Esophagus muscularis mucosa (tissue), 4 donors: ENCODE measurements at regions of chr7 and their contacts with region 1.

Region 1: GRCh38 chr7:87152107-87152844 is at the start of gene DMTF1:
- DNase-seq: peak; percentile 99
- H3K4me3 ChIP-seq: peak within 1 kb of the TSS; percentile 69 to 80 (median 74)
- H3K27ac ChIP-seq: peak within 1 kb of the TSS; percentile 86 to 97 (median 96)
- H3K4me1 ChIP-seq: peaks cover 36 to 50% (median 48%) of the 10 kb centered on the region in 4 donors
- H3K27me3 ChIP-seq: no peaks in the 10 kb centered on the region
- CTCF ChIP-seq: no peak
- EP300 ChIP-seq: no peak
- POLR2A ChIP-seq: peak; percentile 66
- total RNA-seq, gene DMTF1: 31.4 to 60.6 (median 40.5) TPM

Region 2: DNA sequence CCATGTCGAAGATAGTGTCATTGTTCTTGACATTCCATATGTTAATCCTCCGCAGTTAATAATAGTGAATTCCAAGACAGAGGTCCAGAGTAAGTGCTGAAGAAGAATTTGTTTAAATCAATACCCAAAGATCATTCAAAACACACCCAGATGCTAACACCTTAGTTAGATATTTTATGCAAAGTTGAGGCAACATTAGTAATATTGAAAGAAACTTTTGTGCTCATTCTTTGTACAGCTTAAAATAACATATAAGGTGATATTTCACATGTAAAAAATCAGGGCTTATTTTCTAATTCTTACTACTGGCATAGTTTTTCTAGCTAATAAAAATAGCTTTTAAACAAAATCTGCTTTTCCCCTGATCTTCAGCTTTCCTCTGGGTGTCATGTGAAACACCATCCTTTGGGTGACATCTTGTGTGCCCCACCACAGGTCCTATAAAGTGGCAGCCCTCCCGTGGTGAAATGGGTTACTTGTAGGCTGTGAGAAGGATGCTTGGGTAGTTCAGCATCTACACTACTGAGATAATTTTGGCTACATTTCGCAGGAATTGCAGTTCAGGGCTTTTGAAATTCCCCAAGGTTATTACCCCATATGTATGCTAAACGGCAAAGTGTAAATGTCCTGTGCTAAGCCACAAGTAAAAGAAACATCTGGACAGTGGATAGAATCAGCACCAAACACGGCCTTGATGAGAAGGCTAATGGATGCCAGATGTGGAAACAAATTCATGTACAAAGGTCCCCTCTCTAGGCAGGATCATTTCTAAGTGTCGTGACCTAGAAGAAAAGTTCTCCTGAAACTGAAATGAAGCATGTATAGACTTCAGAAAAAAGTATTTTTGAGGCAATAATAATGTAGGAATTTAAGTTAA is 403.2 kb before region 1 on chr7:
- intact Hi-C with region 1: no loop called
- DNase-seq: no peak
- H3K4me3 ChIP-seq: no peak overlapping the region
- H3K27ac ChIP-seq: no peak overlapping the region
- H3K4me1 ChIP-seq: no peaks in the 10 kb centered on the region
- H3K27me3 ChIP-seq: no peaks in the 10 kb centered on the region
- CTCF ChIP-seq: no peak
- EP300 ChIP-seq: no peak
- POLR2A ChIP-seq: no peak

Region 3: DNA sequence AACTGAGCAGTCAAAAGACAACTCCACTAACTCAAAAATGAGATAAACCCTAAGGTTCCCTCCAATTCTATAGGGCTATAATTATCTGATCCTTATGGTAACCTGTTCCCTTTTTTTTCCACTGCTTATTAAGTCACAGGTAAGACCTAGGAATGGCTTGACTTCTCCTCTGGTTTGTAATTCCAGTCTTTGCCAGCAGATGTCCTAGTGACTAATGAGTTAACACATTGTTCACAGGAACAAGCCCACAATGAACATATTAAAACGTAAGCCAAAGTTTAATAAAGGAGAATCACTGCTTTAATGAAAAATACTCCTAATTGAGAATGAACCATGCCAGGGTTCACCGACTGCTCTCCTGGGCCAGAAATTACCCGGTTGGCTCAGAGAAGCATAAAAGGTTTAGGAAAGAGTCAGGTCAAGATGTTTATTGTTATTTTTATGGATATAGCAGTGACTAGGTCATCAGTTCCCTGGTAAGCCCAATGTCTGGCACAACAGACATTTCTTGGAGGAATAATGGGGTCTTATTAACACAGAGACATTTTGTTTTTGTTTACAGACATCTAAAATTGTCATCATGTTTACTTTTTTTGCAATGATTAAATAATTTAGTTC is 213.0 kb before region 1 on chr7:
- intact Hi-C with region 1: loop called (anchors 5 kb)
- DNase-seq: no peak
- H3K4me3 ChIP-seq: no peak overlapping the region
- H3K27ac ChIP-seq: no peak overlapping the region
- H3K4me1 ChIP-seq: peaks cover 0 to 5% (median 4%) of the 10 kb centered on the region in 4 donors
- H3K27me3 ChIP-seq: no peaks in the 10 kb centered on the region
- CTCF ChIP-seq: peak; percentile 59 to 78 (median 75)
- EP300 ChIP-seq: no peak
- POLR2A ChIP-seq: no peak

Region 4: DNA sequence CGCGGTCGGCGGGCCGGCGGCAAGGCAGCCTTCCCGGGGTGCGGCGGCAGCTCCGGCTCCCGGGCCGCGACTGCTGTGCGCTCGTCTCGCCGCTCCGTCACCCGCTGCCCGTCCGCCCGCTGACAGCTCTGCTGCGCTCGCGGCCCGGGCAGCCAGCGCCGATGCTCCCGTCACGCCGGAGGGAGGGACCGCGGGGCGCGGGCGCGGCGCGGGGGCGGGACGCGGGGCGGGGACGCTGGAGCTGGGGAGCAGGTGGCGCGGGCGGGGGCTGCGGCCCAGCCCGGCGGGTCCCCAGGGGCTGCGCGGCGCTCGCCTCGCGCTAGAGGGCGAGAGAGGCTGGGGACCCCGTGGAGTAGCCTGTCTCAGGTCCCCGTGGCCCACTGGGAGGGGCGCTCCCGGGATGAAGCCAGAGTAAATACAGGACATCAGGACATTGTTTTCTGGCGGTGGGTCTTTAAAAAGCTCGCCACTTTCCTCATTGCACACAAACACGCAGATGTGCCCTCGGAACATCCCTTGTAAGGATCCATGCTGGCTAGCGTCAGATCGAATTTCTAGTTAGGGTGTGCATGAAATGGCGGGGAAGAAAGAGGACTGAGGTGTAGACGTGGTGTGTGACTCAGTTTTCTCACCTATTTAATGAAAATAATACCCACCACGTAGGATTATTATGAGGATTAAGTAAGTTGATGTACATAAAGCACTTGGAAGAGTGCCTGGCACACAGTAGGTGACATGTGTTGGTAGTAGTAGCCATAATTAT is 92.6 kb before region 1 on chr7 and contains the start of gene ELAPOR2:
- intact Hi-C with region 1: loop called (anchors 5 kb)
- DNase-seq: no peak
- H3K4me3 ChIP-seq: peak within 1 kb of the TSS; percentile 71 to 80 (median 77)
- H3K27ac ChIP-seq: peak within 1 kb of the TSS; percentile 74 to 79 (median 78)
- H3K4me1 ChIP-seq: peaks cover 12 to 24% (median 14%) of the 10 kb centered on the region in 4 donors
- H3K27me3 ChIP-seq: no peaks in the 10 kb centered on the region
- CTCF ChIP-seq: peak; percentile 45 to 60 (median 60)
- EP300 ChIP-seq: no peak
- POLR2A ChIP-seq: no peak
- total RNA-seq, gene ELAPOR2: 17.7 to 20.7 (median 19.8) TPM

Region 5: DNA sequence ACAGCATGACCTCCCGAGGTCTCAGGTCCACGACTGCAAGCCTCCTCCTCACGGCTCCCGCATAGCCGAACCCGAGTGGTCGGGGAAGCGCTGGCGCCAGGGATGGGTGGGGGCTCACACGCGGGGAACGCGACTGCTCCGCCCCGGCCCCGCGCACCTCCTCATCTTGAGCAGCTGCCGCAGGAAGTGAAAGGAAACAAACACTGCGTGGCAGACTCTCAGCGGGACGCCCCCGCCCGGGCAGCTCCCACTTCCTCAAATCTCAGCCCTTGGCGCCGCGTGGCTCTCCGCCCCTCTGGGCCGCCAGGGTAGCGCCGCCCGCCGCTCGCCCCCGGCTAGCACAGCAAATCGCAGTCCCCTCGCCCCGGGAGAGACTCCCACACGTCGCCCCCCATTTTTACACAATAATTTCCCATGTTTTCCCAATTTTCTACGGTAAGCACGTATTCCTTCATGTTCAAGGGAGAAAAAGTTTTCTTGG is 67.3 kb after region 1 on chr7 and contains the start of gene TMEM243:
- intact Hi-C with region 1: loop called (anchors 2 kb)
- DNase-seq: peak; percentile 95
- H3K4me3 ChIP-seq: peak within 1 kb of the TSS; percentile 72 to 88 (median 82)
- H3K27ac ChIP-seq: peak within 1 kb of the TSS; percentile 82 to 87 (median 85)
- H3K4me1 ChIP-seq: peaks cover 4 to 36% (median 33%) of the 10 kb centered on the region in 4 donors
- H3K27me3 ChIP-seq: no peaks in the 10 kb centered on the region
- CTCF ChIP-seq: peak in 1 of 3 experiments; percentile 6
- EP300 ChIP-seq: no peak
- POLR2A ChIP-seq: no peak
- total RNA-seq, gene TMEM243: 15.0 to 27.9 (median 19.8) TPM

Region 6: GRCh38 chr7:87345166-87345927 is 193.1 kb after region 1 on chr7 and contains the start of gene CROT:
- intact Hi-C with region 1: loop called (anchors 10 kb)
- DNase-seq: peak; percentile 98
- H3K4me3 ChIP-seq: peak within 1 kb of the TSS; percentile 68 to 71 (median 69)
- H3K27ac ChIP-seq: peak within 1 kb of the TSS; percentile 85 to 89 (median 86)
- H3K4me1 ChIP-seq: peaks cover 12 to 33% (median 31%) of the 10 kb centered on the region in 4 donors
- H3K27me3 ChIP-seq: no peaks in the 10 kb centered on the region
- CTCF ChIP-seq: no peak
- EP300 ChIP-seq: no peak
- POLR2A ChIP-seq: no peak
- total RNA-seq, gene CROT: 9.1 to 10.8 (median 9.6) TPM